Natural killer cell (primary cell): ENCODE measurements at regions of chr17 and their contacts with region 1.

Region 1: GRCh38 chr17:29293890-29294579 is at the start of gene NUFIP2:
- DNase-seq: peak; percentile 96 to 99
- ATAC-seq: peak; percentile 84 to 96 (median 87)
- H3K4me3 ChIP-seq: peak within 1 kb of the TSS; percentile 77
- H3K4me3 Mint-ChIP-seq: peak within 1 kb of the TSS; percentile 100
- H3K27ac ChIP-seq: peak within 1 kb of the TSS; percentile 87
- H3K27ac Mint-ChIP-seq: peak within 1 kb of the TSS; percentile 92 to 99
- H3K4me1 ChIP-seq: peaks cover 19% of the 10 kb centered on the region
- H3K4me1 Mint-ChIP-seq: peaks cover 41 to 47% of the 10 kb centered on the region in 2 donors
- H3K27me3 ChIP-seq: no peaks in the 10 kb centered on the region
- H3K27me3 Mint-ChIP-seq: no peaks in the 10 kb centered on the region
- CTCF ChIP-seq: no peak
- total RNA-seq, gene NUFIP2: 79.2 to 112 (median 95.0) TPM

Region 2: GRCh38 chr17:28726226-28727130 is 567.6 kb before region 1 on chr17 and contains the start of gene TLCD1:
- intact Hi-C with region 1: loop called (anchors 5 kb)
- DNase-seq: peak; percentile 88 to 94
- ATAC-seq: peak; percentile 58 to 79 (median 59)
- H3K4me3 ChIP-seq: peak within 1 kb of the TSS; percentile 71
- H3K4me3 Mint-ChIP-seq: peak within 1 kb of the TSS; percentile 96
- H3K27ac ChIP-seq: peak within 1 kb of the TSS; percentile 99
- H3K27ac Mint-ChIP-seq: peak within 1 kb of the TSS; percentile 96
- H3K4me1 ChIP-seq: peaks cover 54% of the 10 kb centered on the region
- H3K4me1 Mint-ChIP-seq: peaks cover 38 to 41% of the 10 kb centered on the region in 2 donors
- H3K27me3 ChIP-seq: no peaks in the 10 kb centered on the region
- H3K27me3 Mint-ChIP-seq: no peaks in the 10 kb centered on the region
- CTCF ChIP-seq: peak; percentile 99
- total RNA-seq, gene TLCD1: 1.0 TPM in 1 of 3 donors, not detected in the others

Region 3: GRCh38 chr17:28982131-28982951 is 311.7 kb before region 1 on chr17:
- intact Hi-C with region 1: loop called (anchors 10 kb)
- DNase-seq: peak; percentile 58 to 92
- ATAC-seq: peak; percentile 82 to 95 (median 91)
- H3K4me3 ChIP-seq: no peak overlapping the region
- H3K4me3 Mint-ChIP-seq: peak overlapping the region; percentile 70
- H3K27ac ChIP-seq: peak overlapping the region; percentile 85
- H3K27ac Mint-ChIP-seq: peak overlapping the region; percentile 97 to 99
- H3K4me1 ChIP-seq: peaks cover 31% of the 10 kb centered on the region
- H3K4me1 Mint-ChIP-seq: peaks cover 18 to 26% of the 10 kb centered on the region in 2 donors
- H3K27me3 ChIP-seq: peaks cover 2% of the 10 kb centered on the region
- H3K27me3 Mint-ChIP-seq: no peaks in the 10 kb centered on the region
- CTCF ChIP-seq: no peak

Region 4: GRCh38 chr17:29078183-29079045 is 215.6 kb before region 1 on chr17:
- intact Hi-C with region 1: no loop called
- DNase-seq: no peak
- ATAC-seq: no peak
- H3K4me3 ChIP-seq: no peak overlapping the region
- H3K4me3 Mint-ChIP-seq: no peak overlapping the region
- H3K27ac ChIP-seq: no peak overlapping the region
- H3K27ac Mint-ChIP-seq: no peak overlapping the region
- H3K4me1 ChIP-seq: peaks cover 17% of the 10 kb centered on the region
- H3K4me1 Mint-ChIP-seq: peaks cover 19 to 25% of the 10 kb centered on the region in 2 donors
- H3K27me3 ChIP-seq: no peaks in the 10 kb centered on the region
- H3K27me3 Mint-ChIP-seq: no peaks in the 10 kb centered on the region
- CTCF ChIP-seq: no peak

Region 5: GRCh38 chr17:29140051-29140621 is 153.9 kb before region 1 on chr17:
- intact Hi-C with region 1: loop called (anchors 2 kb)
- DNase-seq: peak; percentile 65 to 85
- ATAC-seq: peak; percentile 63 to 78 (median 70)
- H3K4me3 ChIP-seq: peak overlapping the region; percentile 56
- H3K4me3 Mint-ChIP-seq: peak overlapping the region; percentile 93
- H3K27ac ChIP-seq: peak overlapping the region; percentile 79
- H3K27ac Mint-ChIP-seq: peak overlapping the region; percentile 93 to 94
- H3K4me1 ChIP-seq: peaks cover 48% of the 10 kb centered on the region
- H3K4me1 Mint-ChIP-seq: peaks cover 43 to 58% of the 10 kb centered on the region in 2 donors
- H3K27me3 ChIP-seq: no peaks in the 10 kb centered on the region
- H3K27me3 Mint-ChIP-seq: no peaks in the 10 kb centered on the region
- CTCF ChIP-seq: no peak

Region 6: GRCh38 chr17:29148790-29149430 is 145.1 kb before region 1 on chr17:
- intact Hi-C with region 1: loop called (anchors 2 kb)
- DNase-seq: peak; percentile 96 to 97
- ATAC-seq: peak; percentile 96 to 99 (median 96)
- H3K4me3 ChIP-seq: peak overlapping the region; percentile 51
- H3K4me3 Mint-ChIP-seq: peak overlapping the region; percentile 84
- H3K27ac ChIP-seq: peak overlapping the region; percentile 86
- H3K27ac Mint-ChIP-seq: peak overlapping the region; percentile 88 to 90
- H3K4me1 ChIP-seq: peaks cover 24% of the 10 kb centered on the region
- H3K4me1 Mint-ChIP-seq: peaks cover 27 to 52% of the 10 kb centered on the region in 2 donors
- H3K27me3 ChIP-seq: no peaks in the 10 kb centered on the region
- H3K27me3 Mint-ChIP-seq: no peaks in the 10 kb centered on the region
- CTCF ChIP-seq: peak; percentile 95

Region 7: DNA sequence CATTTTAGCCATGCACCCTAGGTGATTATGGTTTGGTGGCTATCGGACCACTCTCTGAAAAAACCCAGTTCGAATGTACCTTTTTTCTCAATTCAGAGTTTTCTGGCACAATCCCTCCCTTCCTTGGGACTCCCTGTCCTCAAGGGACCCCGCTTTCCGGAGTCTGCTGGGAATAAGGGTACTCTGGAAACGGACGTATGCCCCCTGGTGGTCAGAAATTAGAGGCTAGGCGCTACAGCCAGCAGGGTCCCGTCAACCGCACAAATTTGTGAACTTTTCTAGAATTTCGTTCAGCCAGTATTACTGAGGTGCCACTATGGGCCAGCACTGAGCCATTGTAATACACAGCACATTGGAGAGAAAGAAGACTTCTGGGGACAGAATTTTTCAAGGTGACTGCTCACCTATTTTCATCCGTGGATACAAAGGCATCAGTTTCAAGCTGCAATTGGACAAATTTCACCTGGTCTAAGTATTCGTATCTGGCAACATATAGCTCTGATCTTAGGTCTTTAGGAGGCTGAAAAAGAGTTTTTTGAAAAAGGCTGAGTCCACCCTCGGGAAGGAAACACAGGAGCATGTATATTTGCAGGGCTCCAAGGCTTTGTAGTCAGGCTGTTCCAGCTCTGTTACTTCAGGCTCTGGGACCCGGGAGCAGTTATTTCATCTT is 74.5 kb before region 1 on chr17:
- intact Hi-C with region 1: loop called (anchors 5 kb)
- DNase-seq: peak; percentile 57 to 85
- ATAC-seq: peak; percentile 73 to 95 (median 94)
- H3K4me3 ChIP-seq: no peak overlapping the region
- H3K4me3 Mint-ChIP-seq: no peak overlapping the region
- H3K27ac ChIP-seq: no peak overlapping the region
- H3K27ac Mint-ChIP-seq: no peak overlapping the region
- H3K4me1 ChIP-seq: peaks cover 4% of the 10 kb centered on the region
- H3K4me1 Mint-ChIP-seq: peaks cover 0 to 5% of the 10 kb centered on the region in 2 donors
- H3K27me3 ChIP-seq: no peaks in the 10 kb centered on the region
- H3K27me3 Mint-ChIP-seq: peaks cover 0 to 2% of the 10 kb centered on the region in 2 donors
- CTCF ChIP-seq: peak; percentile 88

Region 8: GRCh38 chr17:29252101-29252866 is 41.8 kb before region 1 on chr17:
- intact Hi-C with region 1: loop called (anchors 2 kb)
- DNase-seq: peak in 1 of 2 donors; percentile 45
- ATAC-seq: peak in 1 of 3 donors; percentile 29
- H3K4me3 ChIP-seq: no peak overlapping the region
- H3K4me3 Mint-ChIP-seq: no peak overlapping the region
- H3K27ac ChIP-seq: no peak overlapping the region
- H3K27ac Mint-ChIP-seq: peak overlapping the region; percentile 12 to 43
- H3K4me1 ChIP-seq: no peaks in the 10 kb centered on the region
- H3K4me1 Mint-ChIP-seq: peaks cover 9 to 14% of the 10 kb centered on the region in 2 donors
- H3K27me3 ChIP-seq: no peaks in the 10 kb centered on the region
- H3K27me3 Mint-ChIP-seq: no peaks in the 10 kb centered on the region
- CTCF ChIP-seq: peak; percentile 50

Region 9: DNA sequence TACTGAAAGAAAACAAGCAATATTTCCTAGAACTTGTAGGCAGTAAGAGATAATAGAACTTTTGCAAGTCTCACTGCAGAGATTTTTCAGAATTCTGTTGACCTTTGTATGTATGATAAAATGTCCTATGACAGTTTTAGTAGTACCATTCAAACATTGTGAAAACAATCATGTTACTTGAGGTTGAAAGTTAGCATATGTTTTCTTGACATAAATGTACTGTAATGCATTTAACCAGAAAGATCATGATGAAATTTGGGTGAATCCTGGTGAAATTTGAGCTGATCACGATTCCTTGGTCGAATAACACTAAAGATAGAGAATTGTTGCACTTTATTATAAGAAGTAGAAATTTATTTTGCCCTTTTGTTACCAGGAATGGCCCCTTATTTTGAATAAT is 181.9 kb after region 1 on chr17:
- intact Hi-C with region 1: no loop called
- DNase-seq: no peak
- ATAC-seq: no peak
- H3K4me3 ChIP-seq: no peak overlapping the region
- H3K4me3 Mint-ChIP-seq: no peak overlapping the region
- H3K27ac ChIP-seq: no peak overlapping the region
- H3K27ac Mint-ChIP-seq: no peak overlapping the region
- H3K4me1 ChIP-seq: no peaks in the 10 kb centered on the region
- H3K4me1 Mint-ChIP-seq: peaks cover 0 to 9% of the 10 kb centered on the region in 2 donors
- H3K27me3 ChIP-seq: no peaks in the 10 kb centered on the region
- H3K27me3 Mint-ChIP-seq: no peaks in the 10 kb centered on the region
- CTCF ChIP-seq: no peak